Activated T-helper 1 cell treated with anti-CD3 and anti-CD28 coated beads, Interleukin-12 subunit alpha, Interleukin-12 subunit beta, Interleukin-2, Interleukin-4 antibody, amounts not matched to agents 30 ng/mL and 10 ng/mL and 1 ng/mL, durations not matched to agents 14 hours and 24 hours and 36 hours (primary cell): ENCODE measurements at regions of chr4 and their contacts with region 1.

Region 1: GRCh38 chr4:54322818-54323417 is 93.8 kb downstream of the PDGFRA start:
- DNase-seq: peak; percentile 21
- H3K4me3 Mint-ChIP-seq: no peak overlapping the region
- H3K27ac Mint-ChIP-seq: no peak overlapping the region
- H3K4me1 Mint-ChIP-seq: peaks cover 15% of the 10 kb centered on the region
- H3K27me3 Mint-ChIP-seq: no peaks in the 10 kb centered on the region

Region 2: DNA sequence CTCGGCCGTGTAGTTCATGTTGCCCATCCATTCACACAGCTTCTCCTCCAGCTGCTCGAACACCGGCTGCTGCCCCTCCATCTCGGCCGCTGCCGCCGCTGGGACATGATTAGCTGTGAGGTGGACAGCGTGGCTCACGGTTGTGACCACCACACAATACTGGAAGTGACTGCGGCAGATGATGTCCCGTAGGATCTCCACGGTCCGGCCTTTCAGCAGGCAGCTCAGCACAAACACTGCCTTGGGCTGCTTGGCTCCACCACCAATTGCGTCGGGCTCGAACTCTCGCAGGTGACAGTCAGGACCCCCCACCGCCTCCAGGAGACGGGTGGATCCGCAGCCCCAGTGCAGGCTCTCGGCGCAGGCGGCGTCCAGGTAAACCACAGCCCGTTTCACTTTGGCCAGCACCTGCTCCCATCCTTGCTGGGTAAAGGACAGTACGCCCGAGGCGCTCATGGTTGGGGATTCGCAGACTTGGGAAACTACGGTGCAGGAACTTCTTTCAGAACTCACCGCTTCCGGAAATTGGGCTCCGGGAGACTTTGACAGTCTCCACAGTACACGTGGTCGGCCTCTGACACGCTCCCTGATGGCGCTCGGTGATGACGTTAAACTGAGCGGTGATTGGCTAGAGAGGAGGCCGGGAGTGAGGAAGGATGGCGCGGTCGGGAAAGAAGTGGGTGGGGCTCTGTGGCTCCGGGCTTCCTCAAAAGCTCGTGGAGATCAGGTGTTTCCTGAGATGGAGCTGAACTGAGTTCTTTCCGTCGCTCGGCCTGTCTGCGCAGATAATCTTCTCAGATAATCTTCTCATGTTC is 957.2 kb before region 1 on chr4 and contains the start of gene SCFD2:
- intact Hi-C with region 1: loop called (anchors 5 kb)
- DNase-seq: peak; percentile 95
- H3K4me3 Mint-ChIP-seq: peak within 1 kb of the TSS; percentile 98
- H3K27ac Mint-ChIP-seq: peak within 1 kb of the TSS; percentile 88
- H3K4me1 Mint-ChIP-seq: peaks cover 39% of the 10 kb centered on the region
- H3K27me3 Mint-ChIP-seq: peaks cover 5% of the 10 kb centered on the region
- total RNA-seq, gene SCFD2: 39.4 and 40.5 TPM in 2 replicates

Region 3: GRCh38 chr4:54378461-54378860 is 55.5 kb after region 1 on chr4:
- intact Hi-C with region 1: no loop called
- DNase-seq: no peak
- H3K4me3 Mint-ChIP-seq: no peak overlapping the region
- H3K27ac Mint-ChIP-seq: no peak overlapping the region
- H3K4me1 Mint-ChIP-seq: no peaks in the 10 kb centered on the region
- H3K27me3 Mint-ChIP-seq: no peaks in the 10 kb centered on the region

Region 4: GRCh38 chr4:54433686-54434085 is 110.8 kb after region 1 on chr4:
- intact Hi-C with region 1: loop called (anchors 5 kb)
- DNase-seq: no peak
- H3K4me3 Mint-ChIP-seq: no peak overlapping the region
- H3K27ac Mint-ChIP-seq: no peak overlapping the region
- H3K4me1 Mint-ChIP-seq: no peaks in the 10 kb centered on the region
- H3K27me3 Mint-ChIP-seq: peaks cover 14% of the 10 kb centered on the region

Region 5: GRCh38 chr4:54683616-54684346 is 360.9 kb after region 1 on chr4:
- intact Hi-C with region 1: loop called (anchors 5 kb)
- DNase-seq: peak; percentile 15
- H3K4me3 Mint-ChIP-seq: no peak overlapping the region
- H3K27ac Mint-ChIP-seq: no peak overlapping the region
- H3K4me1 Mint-ChIP-seq: peaks cover 6% of the 10 kb centered on the region
- H3K27me3 Mint-ChIP-seq: no peaks in the 10 kb centered on the region

Region 6: GRCh38 chr4:55321707-55322264 is 998.9 kb after region 1 on chr4:
- intact Hi-C with region 1: loop called (anchors 2 kb)
- DNase-seq: peak; percentile 11
- H3K4me3 Mint-ChIP-seq: no peak overlapping the region
- H3K27ac Mint-ChIP-seq: no peak overlapping the region
- H3K4me1 Mint-ChIP-seq: peaks cover 36% of the 10 kb centered on the region
- H3K27me3 Mint-ChIP-seq: peaks cover 3% of the 10 kb centered on the region